Tibial artery (tissue), 4 donors: ENCODE measurements at regions of chr16 and their contacts with region 1.

Region 1: DNA sequence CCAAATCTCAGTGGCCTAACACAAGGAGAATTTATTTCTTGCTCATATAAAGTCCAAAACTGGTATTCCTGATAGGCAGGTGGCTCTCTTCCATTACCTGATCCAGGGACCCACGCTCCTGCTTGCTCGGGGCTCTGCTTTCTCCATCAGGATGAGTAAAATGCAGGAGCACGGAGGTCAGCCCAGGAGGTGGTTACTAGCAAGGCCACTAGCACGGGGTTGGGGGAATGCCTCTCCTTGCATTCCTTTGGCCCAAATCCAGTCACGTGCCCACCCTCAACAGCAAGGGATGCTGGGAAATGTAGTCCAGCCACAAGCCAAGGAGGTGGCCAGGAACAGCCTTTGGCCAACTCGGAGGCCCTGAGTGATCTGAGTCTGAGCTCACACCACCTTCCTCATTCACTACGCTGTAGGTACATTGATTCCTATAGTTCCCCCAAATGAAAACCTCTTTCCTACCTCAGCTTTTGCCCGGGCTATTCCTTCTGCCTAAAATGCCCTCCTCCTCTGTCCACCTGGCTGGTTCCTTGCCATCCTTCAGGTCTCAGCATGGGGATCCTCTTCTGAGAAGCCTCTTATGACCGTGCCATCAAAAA is 38.3 kb upstream of the HAPSTR1 start:
- DNase-seq: peak in 1 of 2 donors; percentile 33
- H3K4me3 ChIP-seq: no peak overlapping the region
- H3K27ac ChIP-seq: no peak overlapping the region
- H3K4me1 ChIP-seq: peaks cover 0 to 8% (median 3%) of the 10 kb centered on the region in 4 donors
- H3K27me3 ChIP-seq: no peaks in the 10 kb centered on the region
- CTCF ChIP-seq: no peak

Region 2: GRCh38 chr16:8963825-8964441 is 89.2 kb before region 1 on chr16 and contains the start of gene USP7:
- intact Hi-C with region 1: no loop called
- DNase-seq: peak; percentile 94 to 95
- H3K4me3 ChIP-seq: peak within 1 kb of the TSS; percentile 80 to 81
- H3K27ac ChIP-seq: peak within 1 kb of the TSS; percentile 80 to 86
- H3K4me1 ChIP-seq: peaks cover 0 to 42% (median 36%) of the 10 kb centered on the region in 4 donors
- H3K27me3 ChIP-seq: no peaks in the 10 kb centered on the region
- CTCF ChIP-seq: no peak

Region 3: DNA sequence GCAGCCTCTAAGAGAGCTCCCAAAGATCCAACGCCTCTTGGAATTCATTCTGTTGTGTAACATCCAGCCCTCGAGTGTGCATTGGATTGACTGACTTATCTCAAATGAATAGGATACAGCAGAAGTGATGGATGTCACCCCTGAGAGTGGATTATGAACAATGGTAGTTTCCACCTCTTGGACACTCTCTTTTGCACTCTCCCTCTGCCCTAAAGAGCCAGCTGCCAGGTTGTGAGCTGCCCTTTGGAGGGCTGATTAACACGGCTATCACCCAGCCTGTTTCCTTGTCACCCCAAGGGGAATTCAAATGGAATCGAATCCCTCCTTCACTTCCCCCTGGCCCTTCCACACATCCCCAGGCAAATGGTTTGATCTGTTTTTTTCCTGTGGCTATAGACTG is 17.1 kb after region 1 on chr16:
- intact Hi-C with region 1: loop called (anchors 2 kb)
- DNase-seq: no peak
- H3K4me3 ChIP-seq: no peak overlapping the region
- H3K27ac ChIP-seq: no peak overlapping the region
- H3K4me1 ChIP-seq: no peaks in the 10 kb centered on the region
- H3K27me3 ChIP-seq: peaks cover 0 to 4% of the 10 kb centered on the region in 2 donors
- CTCF ChIP-seq: no peak

Region 4: GRCh38 chr16:9578459-9578858 is 525.4 kb after region 1 on chr16:
- intact Hi-C with region 1: no loop called
- DNase-seq: no peak
- H3K4me3 ChIP-seq: no peak overlapping the region
- H3K27ac ChIP-seq: no peak overlapping the region
- H3K4me1 ChIP-seq: no peaks in the 10 kb centered on the region
- H3K27me3 ChIP-seq: no peaks in the 10 kb centered on the region
- CTCF ChIP-seq: no peak